ENCODE measurements at regions of chr5 and their contacts with region 1.

Region 1: DNA sequence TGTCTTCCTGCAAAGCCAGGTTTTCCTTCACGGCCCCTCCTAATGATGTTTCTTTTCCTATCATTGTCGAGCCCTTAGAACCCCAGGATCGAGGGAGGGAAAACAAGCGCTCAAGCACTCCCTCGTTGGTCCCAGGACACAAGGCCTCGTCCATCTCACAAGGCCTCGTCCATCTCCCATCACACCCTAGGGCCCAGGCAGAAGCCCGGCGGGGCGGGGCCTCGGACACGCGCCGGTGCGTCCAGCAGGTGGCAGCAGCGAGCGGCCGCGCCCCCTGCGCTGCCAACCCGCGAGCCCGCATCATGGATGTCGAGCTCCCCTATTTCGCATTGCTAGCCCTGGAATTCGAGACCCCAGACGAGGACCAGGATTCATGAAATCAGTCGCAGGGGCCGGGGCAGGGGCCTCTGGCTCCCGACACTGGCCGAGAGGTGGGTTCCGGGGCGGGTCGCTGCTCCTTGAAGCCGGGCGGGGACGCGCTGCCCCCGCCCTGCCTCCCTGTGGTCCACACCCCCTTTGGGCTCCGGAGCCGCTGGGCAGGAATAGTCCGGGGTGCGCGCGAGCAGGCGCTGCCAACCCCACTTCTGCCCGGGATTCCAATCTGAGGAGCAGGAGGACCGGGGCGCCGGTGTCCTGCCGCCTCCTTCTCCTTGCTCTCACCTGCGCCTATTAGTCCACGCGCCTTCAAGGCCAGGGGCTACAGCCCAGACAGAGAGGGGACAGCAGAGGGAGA is at the start of gene ABLIM3:
- DNase-seq: peak; percentile 29 to 95
- H3K4me3 ChIP-seq: peak within 1 kb of the TSS; percentile 24 to 75 (median 51)
- H3K27ac ChIP-seq: no peak within 1 kb of the TSS
- H3K4me1 ChIP-seq: peaks cover 0 to 3% (median 0%) of the 10 kb centered on the region in 4 experiments; a peak in 1 of 7 replicates
- H3K27me3 ChIP-seq: peaks cover 0 to 21% (median 15%) of the 10 kb centered on the region in 4 experiments; a peak in 6 of 7 replicates
- CTCF ChIP-seq: peak; percentile 90 to 94 (median 93)
- EP300 ChIP-seq: no peak
- POLR2A ChIP-seq: no peak
- RAD21 ChIP-seq: peak; percentile 59 to 68
- total RNA-seq, gene ABLIM3: 0.56 and 0.69 TPM in 2 replicates

Region 2: DNA sequence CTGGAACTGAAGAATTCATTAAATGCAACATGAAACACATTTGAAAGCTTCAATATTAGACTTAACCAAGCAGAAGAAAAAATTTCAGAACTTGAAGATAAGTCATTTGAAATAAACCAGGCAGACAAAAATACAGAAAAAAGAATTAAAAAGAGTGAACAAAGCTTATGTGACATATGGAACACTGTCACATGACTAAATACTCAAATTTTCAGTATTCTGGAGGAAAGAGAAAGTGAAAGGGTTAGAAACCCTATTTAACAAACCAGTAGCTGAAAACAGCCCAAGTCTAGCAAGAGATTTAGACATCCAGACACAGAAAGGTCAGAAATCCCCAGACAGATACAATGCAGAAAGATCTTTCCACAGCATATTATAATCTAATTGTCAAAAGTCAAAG is 41.5 kb before region 1 on chr5:
- CTCF ChIA-PET with region 1: no interaction called
- POLR2A ChIA-PET with region 1: no interaction called
- DNase-seq: no peak
- H3K4me3 ChIP-seq: no peak overlapping the region
- H3K27ac ChIP-seq: no peak overlapping the region
- H3K4me1 ChIP-seq: no peaks in the 10 kb centered on the region
- H3K27me3 ChIP-seq: no peaks in the 10 kb centered on the region
- CTCF ChIP-seq: no peak
- EP300 ChIP-seq: no peak
- POLR2A ChIP-seq: no peak
- RAD21 ChIP-seq: no peak

Region 3: DNA sequence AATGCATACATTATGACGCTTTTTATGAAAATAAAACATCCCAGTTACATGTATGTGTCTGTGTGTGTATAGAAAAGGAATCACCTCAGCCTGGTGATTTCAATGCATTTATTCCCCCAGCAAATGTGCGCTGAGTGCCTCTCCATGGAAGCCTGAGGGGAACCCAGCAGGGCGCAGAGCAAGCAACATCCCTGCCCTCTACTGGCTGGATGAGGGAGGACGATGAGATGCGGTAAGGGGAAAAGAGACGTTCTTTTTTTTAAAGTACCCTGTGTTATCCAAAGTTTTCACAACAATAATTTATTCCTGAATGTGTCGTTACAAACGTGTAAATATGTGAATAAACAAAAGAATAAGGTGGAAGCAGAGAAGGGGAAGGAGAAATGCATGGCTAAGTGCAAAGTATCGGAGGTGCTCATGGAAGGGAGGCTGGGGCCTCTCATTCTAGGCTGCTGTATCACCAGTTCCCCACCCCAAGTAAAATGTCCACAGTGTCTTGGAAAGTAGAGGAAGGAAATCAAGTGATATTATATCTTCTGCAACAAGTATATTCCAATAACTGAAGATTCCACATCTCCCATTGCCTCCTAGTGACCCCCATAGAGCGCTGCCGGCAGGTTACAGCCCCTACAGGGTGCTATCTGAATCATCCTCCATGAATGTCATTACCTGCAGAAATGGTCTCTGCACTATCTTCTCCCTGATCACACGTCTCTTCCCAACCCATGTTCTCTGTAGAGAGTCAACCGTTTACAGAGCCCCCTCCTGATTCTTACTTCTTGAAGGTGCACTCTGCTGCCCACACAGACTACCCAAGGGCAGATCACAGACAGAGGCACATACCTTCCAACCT is 13.1 kb before region 1 on chr5:
- CTCF ChIA-PET with region 1: interaction called, 37 read pairs
- POLR2A ChIA-PET with region 1: no interaction called
- DNase-seq: peak in 1 of 2 experiments; percentile 66
- H3K4me3 ChIP-seq: no peak overlapping the region
- H3K27ac ChIP-seq: no peak overlapping the region
- H3K4me1 ChIP-seq: peaks cover 0 to 9% (median 0%) of the 10 kb centered on the region in 4 experiments; a peak in 3 of 7 replicates
- H3K27me3 ChIP-seq: no peaks in the 10 kb centered on the region
- CTCF ChIP-seq: peak; percentile 76 to 84 (median 84)
- EP300 ChIP-seq: no peak
- POLR2A ChIP-seq: no peak
- RAD21 ChIP-seq: peak; percentile 56 to 64

Region 4: GRCh38 chr5:149153751-149154610 is 12.6 kb after region 1 on chr5:
- CTCF ChIA-PET with region 1: interaction called, 30 read pairs
- POLR2A ChIA-PET with region 1: no interaction called
- DNase-seq: no peak
- H3K4me3 ChIP-seq: no peak overlapping the region
- H3K27ac ChIP-seq: no peak overlapping the region
- H3K4me1 ChIP-seq: no peaks in the 10 kb centered on the region
- H3K27me3 ChIP-seq: no peaks in the 10 kb centered on the region; a peak in 1 of 7 replicates
- CTCF ChIP-seq: no peak
- EP300 ChIP-seq: no peak
- POLR2A ChIP-seq: no peak
- RAD21 ChIP-seq: no peak